ENCODE measurements at regions of chr10 and their contacts with region 1.

Region 1: GRCh38 chr10:43308986-43309385 is 42.1 kb upstream of the RASGEF1A start:
- DNase-seq: no peak
- H3K4me3 ChIP-seq: no peak overlapping the region
- H3K27ac ChIP-seq: peak overlapping the region in 1 of 2 donors; percentile 66
- H3K4me1 ChIP-seq: peaks cover 0 to 4% of the 10 kb centered on the region in 2 donors
- H3K27me3 ChIP-seq: no peaks in the 10 kb centered on the region
- CTCF ChIP-seq: no peak
- POLR2A ChIP-seq: no peak

Region 2: GRCh38 chr10:43348511-43349312 is 39.7 kb after region 1 on chr10:
- intact Hi-C with region 1: loop called (anchors 2 kb)
- DNase-seq: peak; percentile 79 to 85
- H3K4me3 ChIP-seq: no peak overlapping the region
- H3K27ac ChIP-seq: no peak overlapping the region
- H3K4me1 ChIP-seq: no peaks in the 10 kb centered on the region
- H3K27me3 ChIP-seq: no peaks in the 10 kb centered on the region
- CTCF ChIP-seq: peak; percentile 78 to 84 (median 82)
- POLR2A ChIP-seq: no peak

Region 3: GRCh38 chr10:44071479-44071878 is 762.5 kb after region 1 on chr10:
- intact Hi-C with region 1: no loop called
- DNase-seq: no peak
- H3K4me3 ChIP-seq: no peak overlapping the region
- H3K27ac ChIP-seq: no peak overlapping the region
- H3K4me1 ChIP-seq: no peaks in the 10 kb centered on the region
- H3K27me3 ChIP-seq: no peaks in the 10 kb centered on the region
- CTCF ChIP-seq: no peak
- POLR2A ChIP-seq: no peak